Activated CD4-positive, alpha-beta T cell treated with anti-CD3 and anti-CD28 coated beads, Interleukin-2, amount 10 ng/mL, durations not matched to agents 24 days and 14 days (primary cell): ENCODE measurements at regions of chr11 and their contacts with region 1.

Region 1: DNA sequence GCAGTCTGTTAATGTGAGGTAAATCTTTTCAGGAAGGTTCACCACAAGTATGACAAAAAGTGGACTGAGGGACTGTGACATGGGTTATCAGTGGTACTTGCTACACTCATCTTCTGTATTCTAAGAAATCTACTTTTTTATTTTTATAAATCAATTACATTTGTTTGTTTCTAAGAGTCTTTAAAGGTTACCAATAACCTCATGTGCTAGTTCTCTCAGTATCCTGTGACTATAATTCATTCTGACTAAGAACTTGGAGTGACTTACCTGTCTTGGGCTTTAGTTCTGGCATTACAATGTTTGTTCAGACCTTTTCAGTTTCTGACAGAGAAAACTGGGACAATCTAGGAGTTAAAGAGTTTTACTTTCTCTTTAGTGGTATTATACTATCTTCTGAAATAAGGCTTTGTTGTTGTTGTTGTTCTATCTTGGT is 108.4 kb downstream of the PDE3B start:
- DNase-seq: no peak
- H3K4me3 Mint-ChIP-seq: peak overlapping the region; percentile 64
- H3K27ac Mint-ChIP-seq: peak overlapping the region; percentile 53
- H3K4me1 Mint-ChIP-seq: peaks cover 38% of the 10 kb centered on the region
- H3K27me3 Mint-ChIP-seq: no peaks in the 10 kb centered on the region

Region 2: GRCh38 chr11:14713496-14714244 is 38.3 kb before region 1 on chr11:
- intact Hi-C with region 1: loop called (anchors 5 kb)
- DNase-seq: peak; percentile 72
- H3K4me3 Mint-ChIP-seq: peak overlapping the region; percentile 10
- H3K27ac Mint-ChIP-seq: peak overlapping the region; percentile 76
- H3K4me1 Mint-ChIP-seq: peaks cover 31% of the 10 kb centered on the region
- H3K27me3 Mint-ChIP-seq: no peaks in the 10 kb centered on the region